Head of caudate nucleus (tissue), 42 donors: ENCODE measurements at regions of chr11 and their contacts with region 1.

Region 1: DNA sequence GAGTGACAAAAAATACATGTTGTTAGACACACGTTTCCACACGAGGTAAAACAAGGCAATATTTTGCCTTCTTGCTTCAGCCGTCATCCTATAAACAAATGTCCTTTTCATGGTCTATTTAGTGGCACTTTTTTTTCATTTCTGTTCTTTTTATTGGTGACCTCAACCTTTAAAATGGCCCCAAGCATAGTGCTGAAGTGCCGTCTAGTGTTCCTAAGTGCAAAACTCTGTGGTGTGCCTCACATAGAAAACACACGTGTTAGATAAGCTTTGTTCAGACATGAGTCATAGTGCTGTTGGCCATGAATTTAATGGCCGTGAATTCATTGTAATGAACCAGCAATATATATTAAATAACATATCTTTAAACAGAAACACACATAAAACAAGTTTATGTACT is 15.6 kb downstream of the OVCH2 start:
- DNase-seq: no peak

Region 2: GRCh38 chr11:7098235-7098832 is 592.3 kb before region 1 on chr11:
- intact Hi-C with region 1: loop called (anchors 10 kb)
- DNase-seq: peak in 3 of 42 donors; percentile 8 to 46 (median 10)